ENCODE measurements at regions of chr6 and their contacts with region 1.

Region 1: GRCh38 chr6:73866305-73866704 is 170.3 kb downstream of the CD109 start:
- DNase-seq: no peak
- ATAC-seq: no peak
- H3K4me3 ChIP-seq: no peak overlapping the region
- H3K27ac ChIP-seq: no peak overlapping the region
- H3K4me1 ChIP-seq: no peaks in the 10 kb centered on the region
- H3K27me3 ChIP-seq: no peaks in the 10 kb centered on the region
- CTCF ChIP-seq: no peak

Region 2: GRCh38 chr6:73951183-73951582 is 84.9 kb after region 1 on chr6:
- CTCF ChIA-PET with region 1: no interaction called
- POLR2A ChIA-PET with region 1: no interaction called
- in situ Hi-C with region 1: no loop called
- intact Hi-C with region 1: loop called (anchors 10 kb)
- DNase-seq: no peak
- ATAC-seq: no peak
- H3K4me3 ChIP-seq: no peak overlapping the region
- H3K27ac ChIP-seq: no peak overlapping the region
- H3K4me1 ChIP-seq: no peaks in the 10 kb centered on the region
- H3K27me3 ChIP-seq: 0 out of 2 replicates have a peak, but pooled peaks cover 2% of the 10 kb centered on the region
- CTCF ChIP-seq: no peak

Measured in Panc1 (cell line).